Psoas muscle (tissue), 8 donors: ENCODE measurements at regions of chr19 and their contacts with region 1.

Region 1: GRCh38 chr19:38891771-38892170 is 7.6 kb downstream of the SIRT2 start:
- DNase-seq: no peak
- ATAC-seq: no peak
- H3K4me3 ChIP-seq: no peak overlapping the region
- H3K27ac ChIP-seq: peak overlapping the region; percentile 80
- H3K4me1 ChIP-seq: peaks cover 57% of the 10 kb centered on the region
- H3K27me3 ChIP-seq: no peaks in the 10 kb centered on the region
- CTCF ChIP-seq: no peak

Region 2: GRCh38 chr19:38849860-38850435 is 41.8 kb before region 1 on chr19 and contains the start of gene HNRNPL:
- intact Hi-C with region 1: loop called in 1 of 2 experiments (anchors 5 kb)
- DNase-seq: peak; percentile 99 to 100
- ATAC-seq: peak; percentile 73 to 76 (median 75)
- H3K4me3 ChIP-seq: peak within 1 kb of the TSS; percentile 98
- H3K27ac ChIP-seq: peak within 1 kb of the TSS; percentile 100
- H3K4me1 ChIP-seq: peaks cover 44% of the 10 kb centered on the region
- H3K27me3 ChIP-seq: no peaks in the 10 kb centered on the region
- CTCF ChIP-seq: peak; percentile 45
- total RNA-seq, gene HNRNPL: 151 to 229 (median 198) TPM

Region 3: GRCh38 chr19:38970664-38971532 is 79.1 kb after region 1 on chr19:
- intact Hi-C with region 1: no loop called
- DNase-seq: no peak
- ATAC-seq: no peak
- H3K4me3 ChIP-seq: no peak overlapping the region
- H3K27ac ChIP-seq: no peak overlapping the region
- H3K4me1 ChIP-seq: no peaks in the 10 kb centered on the region
- H3K27me3 ChIP-seq: no peaks in the 10 kb centered on the region
- CTCF ChIP-seq: no peak